Left lung (tissue), 14 donors: ENCODE measurements at regions of chr3 and their contacts with region 1.

Region 1: DNA sequence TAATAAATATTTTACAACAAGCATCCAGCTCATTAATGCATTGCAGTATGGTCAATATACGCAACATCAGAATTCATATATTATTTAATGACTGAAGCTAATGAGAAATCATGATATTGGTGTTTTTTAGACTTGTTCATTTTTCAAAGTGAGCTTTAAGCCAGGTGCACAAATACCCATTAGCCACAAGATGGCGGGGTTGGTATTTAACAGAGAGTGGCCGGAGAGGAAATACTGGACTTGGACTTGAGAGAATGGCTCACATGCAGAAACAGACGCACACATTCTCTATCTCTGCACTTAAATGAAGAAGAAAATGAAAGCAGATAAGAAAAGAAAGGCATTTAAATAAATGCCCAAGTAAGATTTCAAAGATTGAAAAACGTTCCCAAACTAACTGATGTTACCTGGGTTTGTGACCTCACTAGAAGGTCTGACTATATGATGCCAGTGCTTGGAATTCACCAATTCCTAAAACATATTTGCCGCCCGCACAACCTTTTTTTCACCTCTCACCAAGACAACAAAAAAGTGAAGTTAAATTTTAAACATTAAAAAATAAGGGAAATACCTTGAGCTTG is 21.2 kb upstream of the CRBN start:
- DNase-seq: peak in 2 of 4 donors; percentile 70 to 79
- ATAC-seq: peak; percentile 92
- H3K4me3 ChIP-seq: no peak overlapping the region
- H3K27ac ChIP-seq: no peak overlapping the region
- H3K4me1 ChIP-seq: no peaks in the 10 kb centered on the region
- H3K27me3 ChIP-seq: no peaks in the 10 kb centered on the region
- CTCF ChIP-seq: peak; percentile 55 to 71

Region 2: GRCh38 chr3:3160826-3161225 is 39.9 kb before region 1 on chr3:
- intact Hi-C with region 1: no loop called
- DNase-seq: no peak
- ATAC-seq: no peak
- H3K4me3 ChIP-seq: no peak overlapping the region
- H3K27ac ChIP-seq: no peak overlapping the region
- H3K4me1 ChIP-seq: no peaks in the 10 kb centered on the region
- H3K27me3 ChIP-seq: no peaks in the 10 kb centered on the region
- CTCF ChIP-seq: no peak

Region 3: GRCh38 chr3:3170998-3171397 is 29.7 kb before region 1 on chr3:
- intact Hi-C with region 1: no loop called
- DNase-seq: peak in 1 of 4 donors; percentile 14
- ATAC-seq: peak; percentile 68
- H3K4me3 ChIP-seq: no peak overlapping the region
- H3K27ac ChIP-seq: no peak overlapping the region
- H3K4me1 ChIP-seq: peaks cover 0 to 45% of the 10 kb centered on the region in 2 donors
- H3K27me3 ChIP-seq: no peaks in the 10 kb centered on the region
- CTCF ChIP-seq: peak in 1 of 2 donors; percentile 34

Region 4: DNA sequence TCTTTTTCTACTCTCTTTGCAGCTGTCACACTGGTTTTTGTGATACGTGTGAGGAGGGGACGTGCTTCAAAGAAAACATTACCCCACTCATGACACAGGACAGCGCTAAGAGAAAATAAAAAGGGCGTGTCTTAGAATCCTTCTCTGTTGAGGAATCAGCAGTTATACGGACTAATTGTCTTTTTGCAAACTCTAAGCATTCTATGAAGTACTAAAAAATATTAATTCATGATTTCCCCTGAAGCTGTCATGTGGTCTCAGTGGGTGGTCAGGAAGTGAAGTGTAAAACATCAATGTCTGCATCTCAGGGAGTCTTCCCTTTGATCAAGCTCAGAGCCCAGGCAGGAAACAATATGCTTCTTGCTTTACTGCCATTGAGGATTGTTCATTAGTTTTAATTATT is 96.3 kb after region 1 on chr3:
- intact Hi-C with region 1: no loop called
- DNase-seq: no peak
- ATAC-seq: no peak
- H3K4me3 ChIP-seq: no peak overlapping the region
- H3K27ac ChIP-seq: no peak overlapping the region
- H3K4me1 ChIP-seq: no peaks in the 10 kb centered on the region
- H3K27me3 ChIP-seq: no peaks in the 10 kb centered on the region
- CTCF ChIP-seq: no peak

Region 5: GRCh38 chr3:4284865-4285264 is 1084.1 kb after region 1 on chr3:
- intact Hi-C with region 1: loop called in 1 of 2 experiments (anchors 10 kb)
- DNase-seq: no peak
- ATAC-seq: no peak
- H3K4me3 ChIP-seq: no peak overlapping the region
- H3K27ac ChIP-seq: no peak overlapping the region
- H3K4me1 ChIP-seq: no peaks in the 10 kb centered on the region
- H3K27me3 ChIP-seq: no peaks in the 10 kb centered on the region
- CTCF ChIP-seq: no peak